PC-9 (cell line): ENCODE measurements at regions of chr12 and their contacts with region 1.

Region 1: GRCh38 chr12:6613776-6614512 is 6.8 kb upstream of the CHD4 start:
- DNase-seq: peak; percentile 91 to 97
- H3K4me3 ChIP-seq: peak overlapping the region; percentile 8; the same call in 1 of the 2 replicates
- H3K27ac ChIP-seq: peak overlapping the region; percentile 51
- H3K4me1 ChIP-seq: peaks cover 34% of the 10 kb centered on the region
- H3K27me3 ChIP-seq: no peaks in the 10 kb centered on the region
- CTCF ChIP-seq: no peak

Region 2: GRCh38 chr12:5846950-5847349 is 767.0 kb before region 1 on chr12:
- CTCF ChIA-PET with region 1: no interaction called
- POLR2A ChIA-PET with region 1: no interaction called
- intact Hi-C with region 1: no loop called
- DNase-seq: no peak
- H3K4me3 ChIP-seq: no peak overlapping the region
- H3K27ac ChIP-seq: no peak overlapping the region
- H3K4me1 ChIP-seq: no peaks in the 10 kb centered on the region
- H3K27me3 ChIP-seq: peaks cover 91% of the 10 kb centered on the region
- CTCF ChIP-seq: no peak

Region 3: DNA sequence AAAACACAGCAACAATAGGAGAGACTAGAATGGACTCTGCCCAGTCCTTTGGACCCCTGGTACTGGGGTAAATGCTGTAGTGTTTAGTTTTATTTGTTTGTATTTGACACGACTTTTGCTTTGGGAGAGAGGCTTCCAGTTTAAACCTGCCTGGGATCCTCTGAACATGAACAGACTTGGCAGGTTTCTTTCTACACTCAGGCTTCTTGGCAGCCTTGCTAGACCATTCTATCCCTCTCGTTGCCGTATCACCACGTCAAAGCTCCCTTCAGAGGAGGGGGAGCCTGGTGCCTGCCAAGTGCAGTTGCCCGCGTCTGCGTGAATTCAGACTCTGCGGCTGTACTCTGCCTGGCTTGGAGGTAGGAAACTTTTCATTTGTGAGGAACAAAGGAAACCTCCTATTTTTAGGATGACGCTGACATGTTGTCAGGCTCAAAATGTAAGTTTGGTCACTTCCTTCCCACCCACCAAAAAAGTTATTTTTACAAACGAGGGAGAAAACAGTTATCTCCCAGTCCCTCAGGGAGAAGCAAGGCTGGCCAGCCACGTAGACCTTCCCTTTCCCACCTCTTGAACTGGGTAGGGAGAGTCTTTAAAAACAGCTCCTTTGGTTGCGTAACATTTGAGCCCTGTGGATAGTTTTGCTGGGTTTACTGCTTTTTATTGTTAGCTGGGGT is 387.8 kb before region 1 on chr12:
- CTCF ChIA-PET with region 1: no interaction called
- POLR2A ChIA-PET with region 1: no interaction called
- intact Hi-C with region 1: no loop called
- DNase-seq: no peak
- H3K4me3 ChIP-seq: no peak overlapping the region
- H3K27ac ChIP-seq: peak overlapping the region; percentile 25
- H3K4me1 ChIP-seq: peaks cover 88% of the 10 kb centered on the region
- H3K27me3 ChIP-seq: no peaks in the 10 kb centered on the region
- CTCF ChIP-seq: no peak

Region 4: DNA sequence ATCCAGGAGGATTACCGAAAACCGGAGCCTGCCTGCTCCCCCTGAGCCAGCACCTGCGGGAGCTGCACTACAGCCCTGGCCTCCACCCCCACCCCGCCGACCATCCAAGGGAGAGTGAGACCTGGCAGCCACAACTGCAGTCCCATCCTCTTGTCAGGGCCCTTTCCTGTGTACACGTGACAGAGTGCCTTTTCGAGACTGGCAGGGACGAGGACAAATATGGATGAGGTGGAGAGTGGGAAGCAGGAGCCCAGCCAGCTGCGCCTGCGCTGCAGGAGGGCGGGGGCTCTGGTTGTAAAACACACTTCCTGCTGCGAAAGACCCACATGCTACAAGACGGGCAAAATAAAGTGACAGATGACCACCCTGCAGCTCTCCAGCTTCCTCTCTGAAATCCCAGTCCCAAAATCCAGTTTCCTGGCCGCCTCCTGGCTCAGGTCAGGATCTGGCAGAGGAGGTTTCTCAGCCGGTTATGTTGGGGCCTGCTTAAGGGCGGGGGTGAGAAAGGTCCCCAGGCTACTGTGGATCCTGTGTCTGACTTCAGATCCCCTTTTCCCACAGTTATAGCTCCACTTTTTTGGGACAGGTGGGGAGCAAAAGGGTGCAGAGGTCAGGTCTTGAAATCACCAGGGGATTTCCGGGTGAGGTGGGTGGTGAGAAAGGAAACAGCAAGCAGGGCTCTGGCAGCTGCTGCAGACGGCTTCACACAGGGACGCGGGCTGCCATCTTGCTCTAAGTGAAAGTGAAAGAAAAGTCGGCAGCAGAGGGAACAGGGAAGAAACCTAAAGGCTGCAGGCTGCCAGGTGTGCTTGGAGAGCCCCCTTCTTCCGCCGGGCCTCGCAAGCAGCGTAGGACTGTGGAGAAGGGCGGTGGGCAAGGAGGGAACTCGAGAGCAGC is 162.3 kb before region 1 on chr12 and contains the start of gene TAPBPL:
- CTCF ChIA-PET with region 1: interaction called, 18 read pairs
- POLR2A ChIA-PET with region 1: no interaction called
- intact Hi-C with region 1: no loop called
- DNase-seq: peak; percentile 70 to 85
- H3K4me3 ChIP-seq: peak within 1 kb of the TSS; percentile 63
- H3K27ac ChIP-seq: peak within 1 kb of the TSS; percentile 52
- H3K4me1 ChIP-seq: peaks cover 13% of the 10 kb centered on the region
- H3K27me3 ChIP-seq: no peaks in the 10 kb centered on the region
- CTCF ChIP-seq: no peak
- total RNA-seq, gene TAPBPL: 26.0 and 27.8 TPM in 2 replicates

Region 5: DNA sequence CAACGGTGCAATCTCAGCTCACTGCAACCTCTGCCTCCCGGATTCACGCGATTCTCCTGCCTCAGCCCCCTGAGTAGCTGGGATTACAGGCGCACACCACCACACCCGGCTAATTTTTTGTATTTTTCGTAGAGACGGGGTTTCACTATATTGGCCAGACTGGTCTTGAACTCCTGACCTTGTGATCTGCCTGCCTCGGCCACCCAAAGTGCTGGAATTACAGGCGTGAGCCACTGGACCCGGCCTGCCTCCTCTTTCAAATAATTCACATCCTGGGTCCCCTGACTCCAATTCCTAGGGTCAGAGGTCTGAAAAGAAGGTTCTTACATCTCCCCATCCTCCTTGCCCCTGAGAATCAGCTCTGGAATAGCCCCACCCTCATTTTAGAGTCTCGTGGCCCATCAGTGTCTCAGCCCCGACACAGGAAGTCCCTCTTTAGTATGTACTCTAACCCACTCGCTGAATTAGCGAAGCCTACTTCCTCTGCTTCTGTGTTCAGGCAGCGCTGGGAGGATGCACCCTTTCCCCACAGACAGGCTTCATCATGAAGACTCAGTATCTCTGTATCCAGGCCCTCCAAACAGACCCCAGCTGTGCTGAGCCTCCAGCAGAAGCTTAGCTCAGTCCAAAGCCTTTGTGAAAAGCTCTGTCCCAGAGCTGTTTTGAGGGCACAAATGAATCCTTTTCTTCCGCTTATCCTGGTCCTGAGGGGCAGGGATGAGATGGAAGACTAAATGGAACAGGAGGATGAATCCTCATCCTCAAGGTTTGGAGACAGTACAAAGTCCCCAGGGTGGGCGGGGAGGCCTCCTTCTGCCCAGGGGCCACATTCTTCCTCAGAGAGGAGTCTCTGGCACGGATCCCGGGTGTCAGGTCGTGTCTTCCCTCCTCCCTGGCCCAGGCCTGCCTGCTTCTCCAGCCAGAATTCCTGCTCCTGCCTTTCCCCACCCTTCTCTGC is 18.4 kb after region 1 on chr12:
- CTCF ChIA-PET with region 1: interaction called, 9 read pairs
- POLR2A ChIA-PET with region 1: interaction called, 19 read pairs
- intact Hi-C with region 1: no loop called
- DNase-seq: peak in 1 of 2 experiments; percentile 17
- H3K4me3 ChIP-seq: no peak overlapping the region
- H3K27ac ChIP-seq: no peak overlapping the region
- H3K4me1 ChIP-seq: peaks cover 22% of the 10 kb centered on the region
- H3K27me3 ChIP-seq: no peaks in the 10 kb centered on the region
- CTCF ChIP-seq: no peak

Region 6: DNA sequence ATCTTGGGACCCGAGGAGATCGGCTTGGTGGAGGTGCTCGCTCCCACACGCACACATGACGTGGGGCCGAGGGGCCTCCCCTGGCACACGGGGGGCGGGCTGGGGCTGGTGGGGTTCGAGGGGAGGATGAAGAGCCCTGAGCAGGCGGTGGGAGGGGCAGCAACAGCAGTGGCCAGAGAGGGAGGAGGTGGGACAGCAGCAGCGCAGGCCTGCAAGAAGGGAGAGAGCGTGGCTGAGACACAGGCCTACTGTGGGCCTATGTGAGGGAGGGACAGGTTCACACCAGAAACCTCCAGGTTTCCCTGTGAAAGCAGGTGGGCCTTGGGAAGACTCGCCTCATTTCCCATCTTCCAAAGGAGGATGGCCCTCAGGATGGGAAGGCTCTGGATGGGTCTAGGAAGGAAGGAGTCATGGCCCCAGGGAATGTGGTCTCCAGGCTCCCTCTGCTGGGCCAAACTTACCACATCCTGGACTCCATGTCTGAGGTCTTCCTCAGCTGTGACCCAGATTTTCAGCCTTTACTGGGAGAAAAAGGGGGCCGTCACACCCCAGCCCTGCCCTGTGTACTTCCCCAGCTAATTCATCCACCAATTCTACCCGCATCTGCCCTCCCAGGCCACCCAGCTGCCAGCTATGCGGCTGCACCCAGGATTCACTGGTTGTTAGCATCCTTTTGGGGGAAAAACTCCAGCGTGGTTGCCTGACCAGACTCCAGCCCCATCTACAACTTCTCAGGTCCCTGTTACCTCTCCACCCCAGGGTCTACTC is 83.8 kb after region 1 on chr12:
- CTCF ChIA-PET with region 1: interaction called, 4 read pairs
- POLR2A ChIA-PET with region 1: no interaction called
- intact Hi-C with region 1: loop called (anchors 1 kb)
- DNase-seq: peak; percentile 43 to 68
- H3K4me3 ChIP-seq: no peak overlapping the region
- H3K27ac ChIP-seq: no peak overlapping the region
- H3K4me1 ChIP-seq: no peaks in the 10 kb centered on the region
- H3K27me3 ChIP-seq: peaks cover 43% of the 10 kb centered on the region
- CTCF ChIP-seq: peak; percentile 74

Region 7: DNA sequence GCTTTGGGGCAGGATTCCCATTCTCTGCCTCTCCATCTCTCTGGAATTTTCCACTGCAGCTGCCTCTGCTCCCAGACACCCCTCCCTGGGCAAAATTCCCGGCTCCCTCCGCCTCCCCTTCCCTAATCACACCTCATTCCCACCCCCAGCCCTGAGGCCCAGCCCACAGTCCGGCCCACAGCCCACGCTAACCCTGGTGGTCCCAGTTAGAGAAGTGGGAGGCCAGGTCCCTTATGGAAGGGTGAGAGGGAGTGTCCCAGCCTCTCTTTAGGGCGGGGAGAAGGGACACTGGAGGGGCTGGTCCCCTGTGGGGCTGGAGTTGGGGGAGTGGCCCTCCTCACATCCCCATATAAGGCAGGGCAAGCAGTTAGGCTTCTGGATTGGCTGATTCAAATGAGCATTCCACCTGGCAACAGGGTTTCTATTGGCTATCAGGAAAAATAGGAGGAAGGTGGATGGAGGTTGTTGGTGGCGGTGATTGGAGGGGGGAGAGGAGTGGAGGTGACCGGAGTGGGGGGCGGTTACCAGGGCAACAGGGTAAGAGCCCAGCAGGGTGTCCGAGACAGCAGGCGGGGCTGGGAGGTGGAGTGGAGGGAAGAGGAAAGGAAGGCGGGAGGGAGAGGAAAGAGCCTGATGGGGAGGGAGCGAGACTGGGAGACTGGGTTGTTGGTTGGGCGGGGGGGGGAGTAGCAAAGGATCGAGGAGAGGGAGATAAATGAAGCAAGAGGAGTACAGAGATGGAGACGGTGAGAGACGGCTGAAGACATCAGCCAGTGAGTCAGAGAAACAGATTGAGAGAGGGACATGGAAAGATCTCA is 150.3 kb after region 1 on chr12:
- CTCF ChIA-PET with region 1: interaction called, 16 read pairs
- POLR2A ChIA-PET with region 1: interaction called, 11 read pairs
- intact Hi-C with region 1: loop called (anchors 1 kb)
- DNase-seq: peak; percentile 97 to 98
- H3K4me3 ChIP-seq: peak overlapping the region; percentile 21; the same call in 1 of the 2 replicates
- H3K27ac ChIP-seq: no peak overlapping the region; the same call in 1 of the 2 replicates
- H3K4me1 ChIP-seq: peaks cover 36% of the 10 kb centered on the region
- H3K27me3 ChIP-seq: no peaks in the 10 kb centered on the region
- CTCF ChIP-seq: no peak

Region 8: DNA sequence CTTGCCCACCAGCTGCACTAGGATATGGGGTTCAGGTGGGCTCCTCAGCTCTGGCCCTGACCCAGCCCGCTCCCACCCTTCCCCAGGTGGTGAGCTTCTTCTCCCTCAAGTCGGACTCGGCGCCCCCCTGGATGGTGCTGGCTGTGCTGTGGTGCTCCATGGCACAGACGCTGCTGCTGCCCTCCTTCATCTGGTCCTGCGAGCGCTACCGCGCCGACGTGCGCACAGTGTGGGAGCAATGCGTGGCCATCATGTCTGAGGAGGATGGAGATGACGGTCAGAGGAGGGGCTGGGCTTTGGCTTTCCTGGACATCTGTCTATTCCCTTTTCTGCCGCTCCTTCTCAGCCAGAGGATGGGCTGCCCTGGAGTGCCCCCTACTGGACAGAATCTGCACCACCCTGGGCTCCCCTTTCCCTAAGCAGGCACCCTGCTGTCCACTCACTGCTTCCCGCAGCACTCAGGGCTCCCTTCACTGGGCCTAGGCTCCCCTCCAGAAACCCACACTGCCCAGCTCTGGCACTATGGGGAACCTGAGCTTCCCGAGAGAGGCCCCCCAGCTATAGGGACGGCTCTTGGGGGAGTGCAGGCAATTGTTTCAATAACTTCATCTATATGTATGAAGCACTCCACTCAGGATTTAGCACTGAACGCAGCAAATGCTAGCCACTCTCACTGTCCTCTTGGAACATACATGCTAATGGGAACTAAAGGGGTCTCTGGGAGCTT is 211.6 kb after region 1 on chr12:
- CTCF ChIA-PET with region 1: interaction called, 7 read pairs
- POLR2A ChIA-PET with region 1: interaction called, 3 read pairs
- intact Hi-C with region 1: loop called (anchors 2 kb)
- DNase-seq: peak; percentile 68 to 93
- H3K4me3 ChIP-seq: no peak overlapping the region
- H3K27ac ChIP-seq: no peak overlapping the region
- H3K4me1 ChIP-seq: no peaks in the 10 kb centered on the region; the same call in 1 of the 2 replicates
- H3K27me3 ChIP-seq: peaks cover 97% of the 10 kb centered on the region
- CTCF ChIP-seq: peak; percentile 96

Region 9: DNA sequence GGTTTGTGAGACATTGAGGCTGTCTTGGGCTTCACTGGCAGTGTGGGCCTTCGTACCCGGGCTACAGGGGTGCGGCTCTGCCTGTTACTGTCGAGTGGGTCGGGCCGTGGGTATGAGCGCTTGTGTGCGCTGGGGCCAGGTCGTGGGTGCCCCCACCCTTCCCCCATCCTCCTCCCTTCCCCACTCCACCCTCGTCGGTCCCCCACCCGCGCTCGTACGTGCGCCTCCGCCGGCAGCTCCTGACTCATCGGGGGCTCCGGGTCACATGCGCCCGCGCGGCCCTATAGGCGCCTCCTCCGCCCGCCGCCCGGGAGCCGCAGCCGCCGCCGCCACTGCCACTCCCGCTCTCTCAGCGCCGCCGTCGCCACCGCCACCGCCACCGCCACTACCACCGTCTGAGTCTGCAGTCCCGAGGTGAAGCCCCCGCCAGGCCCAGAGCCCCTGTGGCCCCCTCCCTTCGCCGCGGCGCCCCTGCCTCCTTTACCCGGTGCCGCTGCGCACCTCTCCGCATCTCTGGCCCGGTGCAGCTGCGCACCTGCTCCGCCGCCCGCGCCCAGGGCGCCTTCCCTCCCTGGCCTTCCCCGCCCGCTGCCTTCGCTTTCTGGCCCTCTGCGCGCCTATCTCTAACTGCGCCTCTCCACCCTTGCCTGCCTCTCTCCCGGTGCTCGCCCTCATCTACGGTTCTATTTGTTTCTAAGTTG is 300.5 kb after region 1 on chr12 and contains the start of gene ENO2:
- CTCF ChIA-PET with region 1: no interaction called
- POLR2A ChIA-PET with region 1: no interaction called
- intact Hi-C with region 1: no loop called
- DNase-seq: peak in 1 of 2 experiments; percentile 75
- H3K4me3 ChIP-seq: peak within 1 kb of the TSS; percentile 77
- H3K27ac ChIP-seq: no peak within 1 kb of the TSS
- H3K4me1 ChIP-seq: peaks cover 5% of the 10 kb centered on the region; the same call in 1 of the 2 replicates
- H3K27me3 ChIP-seq: peaks cover 11% of the 10 kb centered on the region
- CTCF ChIP-seq: no peak
- total RNA-seq, gene ENO2: 38.8 and 56.6 TPM in 2 replicates